PC-3 (cell line): ENCODE measurements at regions of chr3 and their contacts with region 1.

Region 1: DNA sequence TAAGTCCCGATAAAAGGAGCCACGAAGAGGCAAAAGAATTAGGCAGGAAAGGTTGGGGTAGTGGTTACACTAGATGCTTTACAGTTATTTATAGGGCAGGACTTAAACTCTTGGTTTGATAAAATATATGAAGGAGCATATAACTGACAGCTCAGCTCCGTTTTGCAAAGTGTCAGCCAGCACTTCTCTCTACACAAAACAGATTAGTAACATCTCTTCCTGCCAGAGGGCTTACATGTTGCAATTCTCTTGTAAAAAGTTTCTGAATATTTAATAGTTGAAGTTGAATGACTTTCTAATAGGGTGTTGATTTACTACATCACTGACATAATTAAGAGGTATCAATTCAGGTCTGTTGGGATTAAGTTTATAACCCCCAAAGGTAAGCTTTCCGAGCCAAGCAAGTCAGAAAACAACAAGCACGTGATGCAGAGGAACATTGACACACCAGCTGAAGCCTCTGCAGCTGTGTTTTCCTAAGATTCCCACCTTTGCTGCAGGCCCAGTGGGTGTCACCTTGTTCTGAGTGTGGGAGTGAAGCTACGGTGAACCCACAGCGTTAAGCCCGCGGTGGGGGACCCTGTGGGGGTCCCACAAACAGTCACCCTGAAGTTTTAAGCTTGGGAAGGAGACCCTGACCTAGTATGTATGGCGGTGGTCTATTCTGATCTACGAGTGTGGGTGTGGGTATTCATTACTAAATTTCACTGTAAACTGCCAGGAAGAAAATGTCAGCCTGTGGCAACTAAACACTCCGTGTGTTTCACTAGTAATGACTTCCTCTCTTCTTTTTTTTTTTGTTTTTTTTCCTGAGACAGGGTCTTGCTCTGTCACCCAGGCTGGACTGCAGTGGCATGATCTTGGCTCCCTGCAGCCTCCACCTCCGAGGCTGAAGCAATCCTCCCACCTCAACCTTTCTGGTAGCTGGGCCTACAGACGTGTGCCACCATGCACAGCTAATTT is 22.0 kb upstream of the ATP13A3 start:
- DNase-seq: no peak
- ATAC-seq: no peak
- H3K4me3 ChIP-seq: no peak overlapping the region
- H3K27ac ChIP-seq: no peak overlapping the region
- H3K4me1 ChIP-seq: no peaks in the 10 kb centered on the region
- H3K27me3 ChIP-seq: no peaks in the 10 kb centered on the region
- CTCF ChIP-seq: no peak

Region 2: DNA sequence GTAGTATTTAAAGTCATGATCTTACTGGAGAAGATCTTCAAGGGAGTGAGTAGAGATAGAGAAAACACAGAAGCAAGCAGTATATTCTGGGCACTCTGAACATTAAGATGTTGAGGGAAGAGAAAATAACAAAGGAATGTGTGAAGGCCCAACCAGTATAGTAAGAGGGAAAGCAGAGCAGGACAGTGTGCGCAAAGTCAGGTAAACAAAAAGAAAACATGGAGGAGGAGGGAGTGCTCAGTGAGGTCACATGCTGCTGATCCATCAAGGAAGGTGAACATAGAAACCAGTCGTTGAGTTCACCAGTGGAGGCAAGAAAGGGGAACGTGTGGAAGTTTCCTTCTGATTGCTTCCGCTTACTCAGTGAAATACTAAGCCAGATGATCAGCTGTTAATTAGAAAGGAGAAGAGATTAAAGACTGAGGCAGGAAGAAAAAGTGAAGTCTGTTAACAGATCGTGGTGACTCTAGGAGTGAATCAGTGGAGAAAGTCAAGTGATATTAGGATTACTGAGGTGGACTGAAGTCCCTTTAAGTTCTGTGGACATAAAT is 868.5 kb before region 1 on chr3:
- CTCF ChIA-PET with region 1: no interaction called
- POLR2A ChIA-PET with region 1: no interaction called
- intact Hi-C with region 1: no loop called
- DNase-seq: no peak
- ATAC-seq: no peak
- H3K4me3 ChIP-seq: no peak overlapping the region
- H3K27ac ChIP-seq: no peak overlapping the region
- H3K4me1 ChIP-seq: no peaks in the 10 kb centered on the region
- H3K27me3 ChIP-seq: no peaks in the 10 kb centered on the region
- CTCF ChIP-seq: no peak

Region 3: DNA sequence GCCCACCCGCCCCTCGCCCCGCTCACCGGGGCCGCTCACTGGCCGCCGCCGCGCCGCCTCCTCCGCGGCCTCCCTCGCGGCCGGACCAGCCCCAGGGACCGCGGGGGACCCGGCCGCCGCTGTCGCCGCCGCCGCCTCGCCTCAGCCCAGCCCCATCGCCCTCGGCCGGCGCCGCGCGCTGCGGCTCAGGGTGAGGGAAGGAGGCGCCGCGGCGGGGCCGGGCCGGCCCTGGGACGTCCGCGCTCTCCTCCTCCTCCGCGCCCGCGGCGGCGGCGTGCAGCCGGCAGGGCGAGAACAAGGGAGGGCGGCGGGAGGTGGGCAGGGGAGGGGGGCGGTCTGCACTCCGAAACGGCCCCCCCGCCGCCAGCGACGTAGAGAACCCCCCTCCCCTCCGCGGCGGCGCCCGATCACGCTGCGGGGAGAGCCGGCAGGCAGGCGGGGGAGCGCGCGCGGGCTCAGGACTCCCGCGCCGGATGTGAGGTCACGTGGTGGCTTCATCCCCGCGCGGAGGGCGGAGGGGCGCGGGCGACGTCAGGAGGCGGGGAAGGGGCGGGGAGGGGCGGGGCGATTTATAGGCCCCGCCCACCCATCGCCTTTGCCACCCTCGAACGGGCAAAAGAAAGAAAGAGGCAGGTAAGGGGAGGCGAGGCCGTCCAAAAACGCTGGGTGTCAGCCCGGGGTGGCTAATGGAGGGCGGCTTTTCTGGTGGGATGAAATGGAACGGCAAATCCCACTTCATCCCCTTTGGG is 22.1 kb before region 1 on chr3 and contains the start of gene ATP13A3:
- CTCF ChIA-PET with region 1: no interaction called
- POLR2A ChIA-PET with region 1: no interaction called
- intact Hi-C with region 1: no loop called
- DNase-seq: peak; percentile 91
- ATAC-seq: peak; percentile 74
- H3K4me3 ChIP-seq: peak within 1 kb of the TSS; percentile 92
- H3K27ac ChIP-seq: peak within 1 kb of the TSS; percentile 24
- H3K4me1 ChIP-seq: peaks cover 33% of the 10 kb centered on the region
- H3K27me3 ChIP-seq: no peaks in the 10 kb centered on the region
- CTCF ChIP-seq: no peak
- total RNA-seq, gene ATP13A3: 69.4 and 101 TPM in 2 replicates

Region 4: DNA sequence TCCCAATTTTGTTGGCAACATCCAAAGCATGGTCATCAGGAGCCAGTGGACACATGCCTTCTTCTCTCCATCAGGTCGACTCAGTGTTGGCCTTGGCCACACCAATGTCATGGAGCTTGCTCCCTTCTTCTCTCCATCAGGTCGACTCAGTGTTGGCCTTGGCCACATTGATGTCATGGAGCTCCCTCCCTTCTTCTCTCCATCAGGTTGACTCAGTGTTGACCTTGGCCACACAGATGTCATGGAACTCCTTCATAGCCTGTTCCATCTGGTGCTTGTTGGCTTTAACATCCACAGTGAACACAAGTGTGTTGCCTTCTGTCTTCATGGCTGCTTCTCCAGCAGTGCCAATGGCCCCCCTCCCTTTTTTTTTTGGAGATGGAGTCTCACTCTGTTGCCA is 54.2 kb after region 1 on chr3:
- CTCF ChIA-PET with region 1: no interaction called
- POLR2A ChIA-PET with region 1: interaction called, 14 read pairs
- intact Hi-C with region 1: no loop called
- DNase-seq: no peak
- ATAC-seq: no peak
- H3K4me3 ChIP-seq: no peak overlapping the region
- H3K27ac ChIP-seq: no peak overlapping the region
- H3K4me1 ChIP-seq: peaks cover 20% of the 10 kb centered on the region
- H3K27me3 ChIP-seq: no peaks in the 10 kb centered on the region
- CTCF ChIP-seq: no peak

Region 5: GRCh38 chr3:194647747-194648146 is 139.0 kb after region 1 on chr3:
- CTCF ChIA-PET with region 1: no interaction called
- POLR2A ChIA-PET with region 1: interaction called, 16 read pairs
- intact Hi-C with region 1: no loop called
- DNase-seq: no peak
- ATAC-seq: no peak
- H3K4me3 ChIP-seq: no peak overlapping the region
- H3K27ac ChIP-seq: no peak overlapping the region
- H3K4me1 ChIP-seq: no peaks in the 10 kb centered on the region
- H3K27me3 ChIP-seq: no peaks in the 10 kb centered on the region
- CTCF ChIP-seq: no peak